K562 (cell line): ENCODE measurements at regions of chr7 and their contacts with region 1.

Region 1: DNA sequence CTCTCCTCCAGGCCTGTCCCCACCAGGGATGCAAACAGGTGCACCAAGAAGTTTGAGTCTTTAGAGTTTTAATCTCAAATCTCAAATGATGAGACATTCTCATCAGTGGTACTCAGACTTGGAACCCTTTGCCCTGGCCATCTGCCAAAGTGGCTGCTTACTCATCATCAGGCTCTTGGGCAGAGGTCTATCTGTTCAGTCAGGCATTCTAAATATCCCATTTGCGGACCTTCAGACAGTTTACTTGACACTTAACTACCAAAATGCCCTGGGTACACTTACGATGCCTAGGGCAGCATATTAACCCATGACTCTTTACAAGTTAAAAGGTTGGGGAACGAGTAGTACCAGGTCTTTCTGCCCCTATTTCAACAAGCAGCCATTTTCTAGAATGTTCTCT is 61.2 kb upstream of the YAE1 start:
- DNase-seq: peak in 2 of 4 experiments; percentile 29 to 52
- ATAC-seq: 0 out of 3 replicates have a peak, but pooled peaks have one; percentile 45
- H3K4me3 ChIP-seq: no peak overlapping the region
- H3K27ac ChIP-seq: no peak overlapping the region
- H3K4me1 ChIP-seq: peaks cover 0 to 4% of the 10 kb centered on the region in 2 experiments; a peak in 2 of 5 replicates
- H3K27me3 ChIP-seq: peaks cover 4 to 11% of the 10 kb centered on the region in 2 experiments; a peak in 4 of 5 replicates
- CTCF ChIP-seq: no peak
- EP300 ChIP-seq: no peak
- POLR2A ChIP-seq: no peak
- RAD21 ChIP-seq: no peak

Region 2: GRCh38 chr7:38411404-38411803 is 1093.6 kb before region 1 on chr7:
- CTCF ChIA-PET with region 1: no interaction called
- POLR2A ChIA-PET with region 1: no interaction called
- in situ Hi-C with region 1: loop called (anchors 25 kb)
- intact Hi-C with region 1: no loop called
- DNase-seq: peak in 2 of 4 experiments; percentile 25 to 54
- ATAC-seq: peak; percentile 93
- H3K4me3 ChIP-seq: no peak overlapping the region
- H3K27ac ChIP-seq: no peak overlapping the region
- H3K4me1 ChIP-seq: peaks cover 0 to 2% of the 10 kb centered on the region in 2 experiments; a peak in 1 of 5 replicates
- H3K27me3 ChIP-seq: no peaks in the 10 kb centered on the region
- CTCF ChIP-seq: peak; percentile 39 to 51 (median 48)
- EP300 ChIP-seq: no peak
- POLR2A ChIP-seq: no peak
- RAD21 ChIP-seq: peak; percentile 15 to 42; a peak in 1 of 4 replicates

Region 3: GRCh38 chr7:38748056-38748611 is 756.8 kb before region 1 on chr7:
- CTCF ChIA-PET with region 1: no interaction called
- POLR2A ChIA-PET with region 1: no interaction called
- in situ Hi-C with region 1: no loop called
- intact Hi-C with region 1: no loop called
- DNase-seq: peak in 2 of 4 experiments; percentile 14 to 20
- ATAC-seq: no peak; the same call in 2 of the 3 replicates
- H3K4me3 ChIP-seq: no peak overlapping the region
- H3K27ac ChIP-seq: no peak overlapping the region
- H3K4me1 ChIP-seq: no peaks in the 10 kb centered on the region
- H3K27me3 ChIP-seq: no peaks in the 10 kb centered on the region
- CTCF ChIP-seq: peak; percentile 20 to 32 (median 20); a peak in 3 of 6 replicates
- EP300 ChIP-seq: no peak
- POLR2A ChIP-seq: no peak
- RAD21 ChIP-seq: no peak